Heart left ventricle (tissue), 16 donors: ENCODE measurements at regions of chr20 and their contacts with region 1.

Region 1: DNA sequence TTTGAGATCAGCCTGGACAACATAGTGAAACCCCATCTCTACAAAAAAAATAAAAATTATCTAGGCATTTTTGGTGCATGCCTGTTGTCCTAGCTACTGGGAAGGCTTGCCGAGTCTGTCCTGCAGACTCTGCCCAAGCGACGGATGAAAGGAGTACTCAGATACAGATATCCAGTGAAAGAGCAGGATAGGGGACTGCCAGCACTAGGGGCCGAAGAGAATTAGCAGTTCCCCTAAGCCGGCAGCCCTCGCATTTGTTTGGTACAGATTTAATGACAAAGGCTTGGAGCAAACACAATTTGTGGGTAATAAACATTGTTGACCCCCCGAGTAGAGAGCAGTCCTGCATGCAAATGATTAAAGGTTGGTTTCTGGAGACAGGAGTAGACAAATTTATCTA is 5.4 kb upstream of the TBC1D20 start:
- DNase-seq: no peak
- ATAC-seq: no peak
- H3K4me3 ChIP-seq: no peak overlapping the region
- H3K27ac ChIP-seq: no peak overlapping the region
- H3K4me1 ChIP-seq: peaks cover 0 to 5% (median 3%) of the 10 kb centered on the region in 12 donors
- H3K27me3 ChIP-seq: no peaks in the 10 kb centered on the region
- CTCF ChIP-seq: no peak
- POLR2A ChIP-seq: no peak

Region 2: DNA sequence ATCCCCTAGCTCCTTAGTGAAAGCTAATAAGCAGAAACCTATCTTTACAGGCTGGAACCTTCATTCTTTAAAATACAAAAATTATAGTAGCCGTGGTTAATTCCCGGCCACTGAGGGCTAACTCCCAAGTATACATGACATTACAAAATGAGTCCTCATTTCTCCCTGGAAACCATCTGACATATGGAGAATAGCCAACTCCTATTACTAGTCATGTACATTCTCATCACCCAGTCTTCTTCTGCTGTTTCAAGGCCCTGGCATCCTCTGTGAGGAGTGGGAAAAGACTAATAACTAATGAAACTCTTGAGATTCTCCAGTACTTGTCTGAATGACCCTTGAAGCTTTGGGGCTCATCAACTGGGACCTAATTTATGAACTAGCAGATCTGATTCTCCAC is 45.7 kb after region 1 on chr20:
- intact Hi-C with region 1: loop called in 1 of 10 experiments (anchors 2 kb)
- DNase-seq: no peak
- ATAC-seq: no peak
- H3K4me3 ChIP-seq: no peak overlapping the region
- H3K27ac ChIP-seq: no peak overlapping the region
- H3K4me1 ChIP-seq: peaks cover 0 to 74% (median 28%) of the 10 kb centered on the region in 12 donors
- H3K27me3 ChIP-seq: no peaks in the 10 kb centered on the region
- CTCF ChIP-seq: no peak
- POLR2A ChIP-seq: no peak